Natural killer cell (primary cell): ENCODE measurements at regions of chr12 and their contacts with region 1.

Region 1: GRCh38 chr12:131647643-131648042 is 63.2 kb upstream of the SFSWAP start:
- DNase-seq: no peak
- ATAC-seq: no peak
- H3K4me3 ChIP-seq: no peak overlapping the region
- H3K4me3 Mint-ChIP-seq: no peak overlapping the region
- H3K27ac ChIP-seq: no peak overlapping the region
- H3K27ac Mint-ChIP-seq: no peak overlapping the region
- H3K4me1 ChIP-seq: no peaks in the 10 kb centered on the region
- H3K4me1 Mint-ChIP-seq: peaks cover 0 to 4% of the 10 kb centered on the region in 2 donors
- H3K27me3 ChIP-seq: no peaks in the 10 kb centered on the region
- H3K27me3 Mint-ChIP-seq: peaks cover 10 to 17% of the 10 kb centered on the region in 2 donors
- CTCF ChIP-seq: no peak

Region 2: GRCh38 chr12:131311764-131312163 is 335.9 kb before region 1 on chr12:
- intact Hi-C with region 1: loop called (anchors 5 kb)
- DNase-seq: no peak
- ATAC-seq: no peak
- H3K4me3 ChIP-seq: no peak overlapping the region
- H3K4me3 Mint-ChIP-seq: no peak overlapping the region
- H3K27ac ChIP-seq: no peak overlapping the region
- H3K27ac Mint-ChIP-seq: no peak overlapping the region
- H3K4me1 ChIP-seq: no peaks in the 10 kb centered on the region
- H3K4me1 Mint-ChIP-seq: no peaks in the 10 kb centered on the region
- H3K27me3 ChIP-seq: no peaks in the 10 kb centered on the region
- H3K27me3 Mint-ChIP-seq: peaks cover 0 to 10% of the 10 kb centered on the region in 2 donors
- CTCF ChIP-seq: no peak

Region 3: GRCh38 chr12:131636940-131637750 is 10.5 kb before region 1 on chr12:
- intact Hi-C with region 1: no loop called
- DNase-seq: no peak
- ATAC-seq: no peak
- H3K4me3 ChIP-seq: no peak overlapping the region
- H3K4me3 Mint-ChIP-seq: no peak overlapping the region
- H3K27ac ChIP-seq: no peak overlapping the region
- H3K27ac Mint-ChIP-seq: no peak overlapping the region
- H3K4me1 ChIP-seq: peaks cover 3% of the 10 kb centered on the region
- H3K4me1 Mint-ChIP-seq: peaks cover 8 to 26% of the 10 kb centered on the region in 2 donors
- H3K27me3 ChIP-seq: no peaks in the 10 kb centered on the region
- H3K27me3 Mint-ChIP-seq: peaks cover 0 to 21% of the 10 kb centered on the region in 2 donors
- CTCF ChIP-seq: no peak

Region 4: GRCh38 chr12:131699434-131699833 is 51.8 kb after region 1 on chr12:
- intact Hi-C with region 1: no loop called
- DNase-seq: no peak
- ATAC-seq: no peak
- H3K4me3 ChIP-seq: no peak overlapping the region
- H3K4me3 Mint-ChIP-seq: no peak overlapping the region
- H3K27ac ChIP-seq: no peak overlapping the region
- H3K27ac Mint-ChIP-seq: no peak overlapping the region
- H3K4me1 ChIP-seq: no peaks in the 10 kb centered on the region
- H3K4me1 Mint-ChIP-seq: no peaks in the 10 kb centered on the region
- H3K27me3 ChIP-seq: no peaks in the 10 kb centered on the region
- H3K27me3 Mint-ChIP-seq: peaks cover 14 to 15% of the 10 kb centered on the region in 2 donors
- CTCF ChIP-seq: no peak